ENCODE measurements at regions of chr16 and their contacts with region 1.

Region 1: DNA sequence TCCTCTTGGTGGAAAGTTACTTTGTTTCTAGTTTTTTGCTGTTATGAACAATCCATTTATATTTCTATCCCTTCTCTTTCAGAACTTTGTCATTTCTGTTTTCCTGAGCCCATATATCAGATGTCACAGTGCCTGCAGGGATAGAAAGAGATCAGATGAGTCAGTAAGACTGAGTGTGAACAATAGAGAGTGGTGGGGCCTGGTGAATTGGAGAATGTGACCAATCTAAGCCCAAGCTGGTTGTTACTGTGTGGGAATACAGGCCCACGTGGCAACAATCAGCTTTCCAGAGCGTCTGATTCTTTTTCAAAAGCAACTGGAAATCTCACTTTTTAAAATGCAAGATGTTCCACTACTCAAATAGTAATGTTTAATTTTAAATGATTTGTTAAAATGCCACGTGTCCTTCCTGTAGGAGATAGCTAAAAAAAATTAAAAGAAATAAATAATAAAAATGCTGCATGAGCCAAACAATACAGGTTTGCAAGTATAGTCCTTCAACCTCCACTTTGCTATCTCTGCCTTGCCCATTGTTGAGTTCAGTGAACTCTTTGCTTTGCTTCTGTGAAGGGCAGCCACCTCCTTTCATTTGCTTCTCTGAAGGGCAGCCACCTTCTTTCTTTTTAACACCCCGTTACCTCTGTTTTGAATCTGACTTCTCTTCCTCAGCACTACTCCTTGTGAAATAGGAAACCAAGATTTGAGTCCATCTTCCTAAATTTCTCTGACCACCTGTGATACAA is 9.6 kb downstream of the DCTN5 start:
- DNase-seq: peak; percentile 14
- ATAC-seq: peak; percentile 81
- H3K4me3 Mint-ChIP-seq: no peak overlapping the region
- H3K27ac Mint-ChIP-seq: peak overlapping the region; percentile 66
- H3K4me1 Mint-ChIP-seq: peaks cover 41% of the 10 kb centered on the region
- H3K27me3 Mint-ChIP-seq: no peaks in the 10 kb centered on the region

Region 2: DNA sequence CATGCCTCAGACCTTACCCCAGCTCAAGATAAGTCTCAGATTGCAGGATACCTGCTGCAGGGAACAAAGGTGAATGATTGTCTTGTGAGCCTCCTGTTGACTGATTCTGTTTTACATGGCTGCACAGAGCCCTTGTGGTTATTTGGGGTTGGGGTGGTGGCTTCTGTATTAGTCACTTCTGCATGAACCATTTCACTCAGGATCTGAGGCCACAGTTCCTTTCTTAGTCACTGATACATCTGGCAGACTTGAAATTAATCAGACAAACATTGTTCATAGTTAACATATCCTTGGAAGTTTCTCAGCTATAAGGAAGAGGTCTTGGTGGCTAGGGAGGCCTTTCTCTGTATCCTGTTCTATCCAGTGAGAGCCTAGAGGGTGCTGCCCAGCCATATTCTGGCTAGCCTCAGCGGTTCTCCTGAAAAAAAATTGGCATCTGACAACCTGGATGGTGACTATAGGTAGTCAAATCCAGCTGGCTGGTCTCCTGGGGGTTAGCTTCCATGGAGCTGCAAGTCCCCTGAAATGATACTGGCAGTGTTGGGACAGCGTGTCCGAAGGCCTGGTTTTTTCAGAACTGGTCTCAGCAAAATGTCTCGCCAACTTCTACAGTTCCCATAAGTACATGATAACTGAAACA is 19.4 kb after region 1 on chr16:
- CTCF ChIA-PET with region 1: interaction called, 14 read pairs
- POLR2A ChIA-PET with region 1: interaction called, 3 read pairs
- intact Hi-C with region 1: loop called in 1 of 2 experiments (anchors 1 kb)
- DNase-seq: peak; percentile 84
- ATAC-seq: peak; percentile 98
- H3K4me3 Mint-ChIP-seq: no peak overlapping the region
- H3K27ac Mint-ChIP-seq: peak overlapping the region; percentile 16
- H3K4me1 Mint-ChIP-seq: peaks cover 20% of the 10 kb centered on the region
- H3K27me3 Mint-ChIP-seq: no peaks in the 10 kb centered on the region